Tibial artery (tissue), 4 donors: ENCODE measurements at regions of chr3 and their contacts with region 1.

Region 1: DNA sequence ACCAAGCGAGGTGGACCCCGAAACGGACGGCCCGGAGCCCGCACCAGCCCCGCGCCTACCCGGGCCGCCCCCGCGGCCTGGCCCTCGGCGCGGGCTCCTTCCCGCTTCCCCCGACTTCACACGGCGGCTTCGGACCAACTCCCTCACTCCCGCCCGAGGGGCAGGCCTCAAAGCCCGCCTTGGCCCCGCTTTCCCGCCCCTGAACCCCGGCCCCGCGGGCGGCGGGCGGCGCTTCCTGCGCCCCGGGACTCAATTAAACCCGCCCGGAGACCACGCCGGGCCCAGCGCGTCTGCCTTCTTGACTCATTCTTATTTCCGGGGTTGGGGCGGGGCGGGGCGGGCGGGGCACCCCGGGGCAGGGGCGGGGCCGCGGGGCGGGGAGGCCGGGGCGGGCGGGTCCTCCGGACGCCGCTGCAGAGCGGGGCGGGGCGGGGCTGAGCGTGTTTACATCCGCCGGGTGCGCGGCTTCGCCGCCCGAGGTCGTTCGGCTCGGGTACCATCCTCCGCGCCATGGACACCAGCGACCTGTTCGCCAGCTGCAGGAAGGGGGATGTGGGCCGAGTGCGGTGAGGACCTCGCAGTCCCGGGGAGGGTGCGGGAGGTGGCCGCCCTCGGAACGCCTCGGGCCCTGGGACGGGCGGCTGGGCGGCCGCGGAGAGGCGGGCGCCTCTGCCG is at the start of gene ABTB1:
- DNase-seq: peak; percentile 86 to 91
- H3K4me3 ChIP-seq: peak within 1 kb of the TSS; percentile 96 to 99
- H3K27ac ChIP-seq: peak within 1 kb of the TSS; percentile 93 to 97
- H3K4me1 ChIP-seq: peaks cover 12 to 43% (median 33%) of the 10 kb centered on the region in 4 donors
- H3K27me3 ChIP-seq: no peaks in the 10 kb centered on the region
- CTCF ChIP-seq: no peak

Region 2: GRCh38 chr3:127590593-127591477 is 81.8 kb before region 1 on chr3 and contains the start of gene TPRA1:
- intact Hi-C with region 1: loop called (anchors 5 kb)
- DNase-seq: peak; percentile 96
- H3K4me3 ChIP-seq: peak within 1 kb of the TSS; percentile 88 to 98
- H3K27ac ChIP-seq: peak within 1 kb of the TSS; percentile 94 to 97
- H3K4me1 ChIP-seq: peaks cover 0 to 46% (median 32%) of the 10 kb centered on the region in 4 donors
- H3K27me3 ChIP-seq: no peaks in the 10 kb centered on the region
- CTCF ChIP-seq: peak in 1 of 2 experiments; percentile 13